ENCODE measurements at regions of chr11 and their contacts with region 1.

Region 1: GRCh38 chr11:8682303-8683114 is at the starts of genes RPL27A and TRIM66:
- DNase-seq: peak; percentile 97
- H3K4me3 Mint-ChIP-seq: peak within 1 kb of the TSS; percentile 81
- H3K27ac Mint-ChIP-seq: peak within 1 kb of the TSS; percentile 98
- H3K4me1 Mint-ChIP-seq: peaks cover 34% of the 10 kb centered on the region
- H3K27me3 Mint-ChIP-seq: no peaks in the 10 kb centered on the region
- CTCF ChIP-seq: no peak
- total RNA-seq, gene RPL27A: 1,377 TPM in 2 replicates
- total RNA-seq, gene TRIM66: 27.3 and 27.4 TPM in 2 replicates

Region 2: DNA sequence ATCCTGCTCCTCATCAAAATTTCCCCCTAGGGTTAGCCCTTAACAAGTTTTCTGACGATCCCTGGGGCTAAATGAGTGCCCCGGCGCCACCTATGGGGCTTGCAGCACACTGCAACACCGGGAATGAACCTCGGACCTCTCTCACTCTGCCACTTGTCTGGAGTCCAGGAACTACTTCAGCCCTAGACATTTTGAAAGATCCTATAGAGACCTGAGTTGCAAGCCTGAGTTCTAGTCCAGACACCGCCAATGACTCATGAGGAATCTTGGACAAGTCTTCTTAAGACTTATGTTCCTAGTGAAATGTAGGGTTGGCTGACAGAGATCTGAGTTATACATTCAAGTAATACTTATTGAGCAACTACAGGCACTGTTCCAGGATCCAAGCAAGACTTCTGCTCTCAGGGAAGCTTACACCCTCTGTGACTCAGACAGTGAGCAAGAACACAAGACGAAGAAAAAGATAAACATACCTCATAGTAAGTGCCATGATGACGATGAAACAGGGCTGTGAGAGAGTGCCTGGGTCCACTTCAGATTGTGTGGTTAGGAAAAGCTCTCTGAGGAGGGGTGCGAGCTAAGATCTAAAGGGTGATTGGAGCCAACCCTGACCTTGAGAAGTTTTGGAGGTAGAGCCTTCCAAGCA is 78.3 kb before region 1 on chr11:
- CTCF ChIA-PET with region 1: interaction called, 3 read pairs
- POLR2A ChIA-PET with region 1: interaction called, 9 read pairs
- intact Hi-C with region 1: loop called (anchors 1 kb)
- DNase-seq: peak; percentile 100
- H3K4me3 Mint-ChIP-seq: peak overlapping the region; percentile 15
- H3K27ac Mint-ChIP-seq: peak overlapping the region; percentile 95
- H3K4me1 Mint-ChIP-seq: peaks cover 25% of the 10 kb centered on the region
- H3K27me3 Mint-ChIP-seq: no peaks in the 10 kb centered on the region
- CTCF ChIP-seq: peak; percentile 64

Region 3: DNA sequence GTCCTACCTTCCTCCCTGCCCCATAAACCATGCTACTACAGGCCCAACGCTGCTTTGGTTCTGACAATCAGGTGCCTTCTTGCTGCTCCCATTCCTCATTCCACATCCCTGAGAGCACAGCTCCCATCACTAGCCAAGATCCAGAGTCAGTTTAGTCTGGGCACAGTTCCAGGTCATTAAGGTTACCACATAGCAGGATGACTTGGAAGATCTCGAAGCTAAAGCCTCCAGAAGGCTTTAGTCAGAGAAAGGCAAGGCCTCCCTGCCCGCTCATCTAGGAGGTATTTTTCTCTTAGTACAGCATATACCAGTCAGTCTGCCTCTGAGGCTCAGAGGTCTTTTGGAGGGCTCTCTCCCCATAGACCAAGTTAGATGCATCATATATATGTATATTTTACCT is 30.4 kb before region 1 on chr11:
- CTCF ChIA-PET with region 1: interaction called, 3 read pairs
- POLR2A ChIA-PET with region 1: interaction called, 12 read pairs
- intact Hi-C with region 1: no loop called
- DNase-seq: peak; percentile 90
- H3K4me3 Mint-ChIP-seq: no peak overlapping the region
- H3K27ac Mint-ChIP-seq: no peak overlapping the region
- H3K4me1 Mint-ChIP-seq: peaks cover 10% of the 10 kb centered on the region
- H3K27me3 Mint-ChIP-seq: no peaks in the 10 kb centered on the region
- CTCF ChIP-seq: no peak

Region 4: DNA sequence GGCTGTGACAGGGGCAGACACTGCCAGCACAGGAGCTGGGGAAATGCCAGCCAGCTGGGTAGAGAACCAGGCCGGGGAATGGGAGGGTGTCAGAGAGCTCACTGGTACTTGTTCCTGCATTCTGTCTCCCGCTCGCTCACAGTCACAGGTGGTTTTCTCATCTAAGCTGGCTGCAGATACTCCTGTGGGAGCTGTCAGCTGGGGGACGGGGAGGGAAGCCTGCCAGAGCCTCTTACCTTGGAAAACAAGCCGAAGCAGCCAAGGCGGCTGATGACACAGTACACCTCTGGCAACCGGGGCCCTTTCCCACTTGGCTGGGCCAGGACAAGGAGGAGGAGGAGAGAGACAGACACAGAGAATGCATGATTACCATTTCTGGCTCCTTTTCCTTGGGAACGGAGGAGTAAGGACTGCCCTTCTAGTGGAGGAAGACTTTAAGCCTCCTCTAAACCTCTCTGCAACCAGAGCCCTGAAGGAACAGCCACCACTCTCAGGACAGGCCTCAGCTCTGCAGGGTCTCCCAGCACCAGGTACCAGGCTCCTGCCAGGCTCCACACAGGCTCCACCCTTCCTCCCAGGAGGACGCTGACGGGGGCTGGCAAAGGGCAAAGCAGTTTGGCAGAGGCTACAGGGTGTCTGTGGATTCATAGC is 25.2 kb after region 1 on chr11:
- CTCF ChIA-PET with region 1: no interaction called
- POLR2A ChIA-PET with region 1: no interaction called
- intact Hi-C with region 1: no loop called
- DNase-seq: no peak
- H3K4me3 Mint-ChIP-seq: no peak overlapping the region
- H3K27ac Mint-ChIP-seq: no peak overlapping the region
- H3K4me1 Mint-ChIP-seq: peaks cover 5% of the 10 kb centered on the region
- H3K27me3 Mint-ChIP-seq: no peaks in the 10 kb centered on the region
- CTCF ChIP-seq: no peak

Region 5: DNA sequence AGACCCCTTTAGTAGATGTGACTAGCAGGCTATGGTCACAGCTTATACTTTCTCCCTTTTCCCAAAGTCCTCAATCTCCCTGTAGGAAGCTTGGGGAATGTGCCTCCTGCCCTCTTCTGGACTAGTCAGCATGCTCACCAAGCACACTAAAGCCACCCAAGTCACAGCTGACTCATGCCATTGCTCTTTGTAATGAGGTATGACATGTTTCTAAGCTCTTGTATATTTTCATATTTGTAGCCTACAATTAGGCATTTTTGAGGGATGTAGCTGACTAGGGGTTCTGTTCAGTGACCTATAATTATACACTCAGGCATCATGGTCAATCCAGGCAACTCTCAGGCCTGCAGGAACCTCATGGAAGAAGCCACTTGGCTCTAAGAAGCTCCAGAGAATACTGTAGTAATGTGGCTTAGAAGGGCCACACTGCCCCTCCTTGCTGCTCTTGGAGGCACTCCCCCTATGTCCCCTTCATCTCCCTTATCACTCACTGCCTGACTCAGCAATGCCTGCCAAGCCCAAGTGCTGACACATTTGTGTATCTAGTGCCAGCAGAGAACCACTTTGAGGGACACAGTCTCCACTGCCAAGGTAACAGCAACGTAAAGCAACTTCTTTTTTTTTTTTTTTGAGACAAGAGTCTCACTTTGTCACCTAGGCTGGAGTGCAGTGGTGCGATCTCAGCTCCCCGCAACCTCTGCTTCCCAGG is 86.3 kb after region 1 on chr11:
- CTCF ChIA-PET with region 1: interaction called, 7 read pairs
- POLR2A ChIA-PET with region 1: interaction called, 18 read pairs
- intact Hi-C with region 1: loop called (anchors 1 kb)
- DNase-seq: peak; percentile 80
- H3K4me3 Mint-ChIP-seq: no peak overlapping the region
- H3K27ac Mint-ChIP-seq: peak overlapping the region; percentile 81
- H3K4me1 Mint-ChIP-seq: peaks cover 59% of the 10 kb centered on the region
- H3K27me3 Mint-ChIP-seq: no peaks in the 10 kb centered on the region
- CTCF ChIP-seq: no peak

Region 6: DNA sequence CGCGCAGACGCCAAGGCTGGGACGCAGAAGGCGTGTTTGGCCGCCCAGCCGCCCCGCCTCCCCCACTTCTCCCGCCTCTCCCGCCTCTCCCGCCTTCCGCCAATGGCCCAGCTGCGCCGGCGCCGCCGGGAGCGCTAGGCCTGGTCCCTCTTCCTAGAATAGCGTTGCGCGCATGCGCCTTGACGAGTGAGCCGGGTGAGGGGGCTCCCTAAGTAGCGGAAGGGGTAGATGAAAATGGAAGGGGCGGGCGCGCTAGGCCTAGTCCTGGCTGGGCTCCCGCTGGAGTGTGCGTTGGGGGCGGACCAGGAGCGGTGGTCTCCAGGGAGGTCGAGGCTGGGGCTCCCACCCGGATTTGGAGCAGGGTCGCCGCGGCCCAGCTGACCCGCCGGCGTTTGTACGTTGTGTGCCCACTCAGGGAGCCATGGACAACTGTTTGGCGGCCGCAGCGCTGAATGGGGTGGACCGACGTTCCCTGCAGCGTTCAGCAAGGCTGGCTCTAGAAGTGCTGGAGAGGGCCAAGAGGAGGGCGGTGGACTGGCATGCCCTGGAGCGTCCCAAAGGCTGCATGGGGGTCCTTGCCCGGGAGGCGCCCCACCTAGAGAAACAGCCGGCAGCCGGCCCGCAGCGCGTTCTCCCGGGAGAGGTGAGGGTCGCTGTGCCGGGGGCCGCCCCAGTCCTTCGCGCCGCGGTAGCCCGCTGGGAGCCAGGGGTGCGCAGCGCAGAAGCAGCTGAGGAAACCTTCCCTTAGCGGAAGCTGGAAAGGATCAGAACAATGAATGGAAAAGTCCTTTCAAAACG is 228.7 kb after region 1 on chr11 and contains the start of gene AKIP1:
- CTCF ChIA-PET with region 1: interaction called, 3 read pairs
- POLR2A ChIA-PET with region 1: interaction called, 24 read pairs
- intact Hi-C with region 1: loop called (anchors 2 kb)
- DNase-seq: peak; percentile 94
- H3K4me3 Mint-ChIP-seq: peak within 1 kb of the TSS; percentile 84
- H3K27ac Mint-ChIP-seq: peak within 1 kb of the TSS; percentile 33
- H3K4me1 Mint-ChIP-seq: peaks cover 34% of the 10 kb centered on the region
- H3K27me3 Mint-ChIP-seq: no peaks in the 10 kb centered on the region
- CTCF ChIP-seq: no peak
- total RNA-seq, gene AKIP1: 64.6 and 67.6 TPM in 2 replicates

Region 7: DNA sequence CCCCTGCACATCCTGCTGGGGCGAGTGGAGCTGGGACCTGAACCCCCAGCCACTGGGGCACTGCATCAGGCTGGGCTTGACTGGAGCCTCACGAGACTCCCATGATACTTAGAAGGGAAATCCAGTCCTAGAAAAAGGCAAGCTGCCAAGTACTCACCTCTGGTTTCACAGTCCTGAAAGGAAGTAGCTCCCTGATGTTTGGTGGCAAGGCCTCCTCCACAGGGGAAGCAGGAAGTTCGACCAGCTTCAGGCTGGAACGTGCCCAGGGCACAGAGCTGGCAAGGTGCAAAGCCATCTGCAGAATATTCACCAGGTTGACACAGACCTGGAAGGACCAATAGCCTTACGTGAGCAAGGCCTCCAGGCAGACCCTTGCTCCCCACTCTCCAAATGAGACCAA is 348.1 kb after region 1 on chr11:
- CTCF ChIA-PET with region 1: no interaction called
- POLR2A ChIA-PET with region 1: no interaction called
- intact Hi-C with region 1: no loop called
- DNase-seq: no peak
- H3K4me3 Mint-ChIP-seq: no peak overlapping the region
- H3K27ac Mint-ChIP-seq: no peak overlapping the region
- H3K4me1 Mint-ChIP-seq: no peaks in the 10 kb centered on the region
- H3K27me3 Mint-ChIP-seq: no peaks in the 10 kb centered on the region
- CTCF ChIP-seq: no peak

Measured in MCF 10A (cell line).